ENCODE measurements at regions of chr5 and their contacts with region 1.

Region 1: DNA sequence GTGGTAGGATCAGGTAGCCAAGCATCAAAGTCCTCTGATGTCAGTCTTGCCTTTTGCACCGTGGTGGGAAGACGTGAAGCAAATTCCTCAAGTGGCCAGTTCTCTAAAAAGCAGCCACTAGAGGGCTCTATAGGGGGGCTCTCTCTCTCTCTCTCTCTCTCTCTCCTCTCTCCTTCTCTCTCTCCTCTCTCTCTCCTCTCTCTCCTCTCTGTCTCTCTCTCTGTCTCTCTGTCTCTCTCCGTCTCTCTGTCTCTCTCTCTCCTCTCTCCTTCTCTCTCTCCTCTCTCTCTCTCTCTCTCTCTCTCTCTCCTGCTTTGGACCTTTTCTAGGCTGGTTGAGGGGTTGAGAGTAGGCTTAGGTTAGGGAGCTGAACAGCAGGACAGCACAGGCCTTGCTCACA is 13.9 kb upstream of the OSMR start:
- DNase-seq: no peak
- H3K4me3 ChIP-seq: no peak overlapping the region
- H3K27ac ChIP-seq: no peak overlapping the region
- H3K4me1 ChIP-seq: peaks cover 0 to 12% (median 7%) of the 10 kb centered on the region in 4 donors
- H3K27me3 ChIP-seq: no peaks in the 10 kb centered on the region
- CTCF ChIP-seq: peak in 2 of 3 experiments; percentile 58 to 69
- EP300 ChIP-seq: no peak
- POLR2A ChIP-seq: no peak

Region 2: GRCh38 chr5:38719916-38720315 is 112.0 kb before region 1 on chr5:
- intact Hi-C with region 1: no loop called
- DNase-seq: no peak
- H3K4me3 ChIP-seq: no peak overlapping the region
- H3K27ac ChIP-seq: peak overlapping the region in 3 of 4 donors; percentile 55 to 63 (median 58)
- H3K4me1 ChIP-seq: peaks cover 11 to 36% (median 20%) of the 10 kb centered on the region in 4 donors
- H3K27me3 ChIP-seq: no peaks in the 10 kb centered on the region
- CTCF ChIP-seq: no peak
- EP300 ChIP-seq: no peak
- POLR2A ChIP-seq: no peak

Region 3: DNA sequence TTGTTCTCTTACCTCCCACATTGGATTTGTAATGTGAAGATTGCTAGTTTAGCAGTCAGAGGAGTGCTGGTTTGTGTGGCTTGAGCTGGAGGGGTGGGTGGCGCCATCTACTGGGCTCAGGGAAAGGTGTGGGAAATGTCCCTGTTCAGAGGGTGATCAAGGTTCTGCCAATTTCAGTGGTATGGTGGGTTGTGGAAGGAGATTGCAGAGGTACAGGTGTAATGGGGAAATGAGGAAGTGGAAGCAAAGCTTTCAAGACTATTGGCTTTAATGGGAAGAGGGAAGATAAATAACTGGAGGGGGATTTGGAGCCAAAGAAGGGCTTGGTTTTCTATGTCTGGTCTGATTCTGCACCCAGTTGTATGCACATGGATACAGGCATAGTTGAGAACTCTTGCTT is 90.3 kb after region 1 on chr5:
- intact Hi-C with region 1: loop called (anchors 5 kb)
- DNase-seq: no peak
- H3K4me3 ChIP-seq: no peak overlapping the region
- H3K27ac ChIP-seq: no peak overlapping the region
- H3K4me1 ChIP-seq: peaks cover 0 to 22% (median 19%) of the 10 kb centered on the region in 4 donors
- H3K27me3 ChIP-seq: no peaks in the 10 kb centered on the region
- CTCF ChIP-seq: peak; percentile 56 to 79 (median 62)
- EP300 ChIP-seq: no peak
- POLR2A ChIP-seq: no peak

Measured in esophagus muscularis mucosa (tissue), 4 donors.